ENCODE measurements at regions of chr14 and their contacts with region 1.

Region 1: GRCh38 chr14:100645192-100645990 is 58.2 kb upstream of the BEGAIN start:
- DNase-seq: peak; percentile 84
- H3K27ac ChIP-seq: no peak overlapping the region
- CTCF ChIP-seq: peak; percentile 84

Region 2: GRCh38 chr14:100417466-100417865 is 227.9 kb before region 1 on chr14:
- CTCF ChIA-PET with region 1: interaction called, 20 read pairs
- POLR2A ChIA-PET with region 1: no interaction called
- DNase-seq: peak; percentile 90
- H3K27ac ChIP-seq: peak overlapping the region; percentile 60
- CTCF ChIP-seq: peak; percentile 56

Region 3: GRCh38 chr14:100440187-100440631 is 205.2 kb before region 1 on chr14:
- CTCF ChIA-PET with region 1: interaction called, 35 read pairs
- POLR2A ChIA-PET with region 1: no interaction called
- DNase-seq: peak; percentile 95
- H3K27ac ChIP-seq: peak overlapping the region; percentile 91
- CTCF ChIP-seq: peak; percentile 92

Region 4: DNA sequence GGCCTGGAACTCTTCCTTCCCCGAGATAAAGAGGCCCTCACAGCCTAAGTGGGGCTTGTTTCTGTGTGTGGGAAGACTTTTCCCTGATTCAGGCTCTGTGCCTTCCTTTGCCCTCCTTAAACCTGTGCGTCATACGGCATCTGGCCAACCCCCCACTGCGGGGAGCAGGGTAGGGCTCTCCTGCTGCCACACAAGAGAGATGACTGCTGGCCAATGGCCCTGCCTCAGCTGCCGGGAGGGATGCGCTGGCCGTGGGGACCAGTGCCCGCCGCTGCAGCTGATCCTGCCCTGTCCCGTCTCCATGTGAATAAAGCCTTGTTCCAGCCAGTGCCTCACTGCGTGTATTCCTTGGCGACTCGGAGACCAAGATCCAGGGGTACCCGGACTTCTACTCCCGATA is 15.7 kb before region 1 on chr14:
- CTCF ChIA-PET with region 1: interaction called, 11 read pairs
- POLR2A ChIA-PET with region 1: no interaction called
- DNase-seq: no peak
- H3K27ac ChIP-seq: no peak overlapping the region
- CTCF ChIP-seq: no peak

Region 5: GRCh38 chr14:101028971-101029667 is 383.7 kb after region 1 on chr14:
- CTCF ChIA-PET with region 1: no interaction called
- POLR2A ChIA-PET with region 1: no interaction called
- DNase-seq: no peak
- H3K27ac ChIP-seq: no peak overlapping the region
- CTCF ChIP-seq: no peak